ENCODE measurements at regions of chr5 and their contacts with region 1.

Region 1: GRCh38 chr5:16934123-16934522 is 2.0 kb downstream of the MYO10 start:
- DNase-seq: peak; percentile 21
- H3K4me3 Mint-ChIP-seq: peak overlapping the region; percentile 45
- H3K27ac Mint-ChIP-seq: no peak overlapping the region
- H3K4me1 Mint-ChIP-seq: peaks cover 28% of the 10 kb centered on the region
- H3K27me3 Mint-ChIP-seq: peaks cover 60% of the 10 kb centered on the region

Region 2: DNA sequence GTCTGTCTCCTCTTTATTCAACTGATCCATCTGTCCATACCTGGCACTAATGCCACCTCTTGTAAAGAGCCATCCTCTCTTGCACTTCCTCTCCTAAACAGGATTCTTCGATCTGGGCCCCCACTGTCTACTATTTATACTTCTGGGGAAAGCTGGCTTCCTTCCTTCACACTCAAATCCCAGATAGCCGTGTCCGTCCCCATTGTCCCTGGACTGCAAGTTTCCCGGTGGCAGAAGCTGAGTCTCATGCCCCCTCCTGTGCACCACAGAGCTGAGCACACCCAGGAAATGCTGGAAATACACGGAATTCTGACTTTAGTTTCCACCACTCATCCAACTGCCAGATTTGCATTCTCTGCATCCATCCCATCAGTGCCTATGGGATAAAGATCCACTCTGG is 838.5 kb before region 1 on chr5:
- intact Hi-C with region 1: no loop called
- DNase-seq: no peak
- H3K4me3 Mint-ChIP-seq: no peak overlapping the region
- H3K27ac Mint-ChIP-seq: no peak overlapping the region
- H3K4me1 Mint-ChIP-seq: no peaks in the 10 kb centered on the region
- H3K27me3 Mint-ChIP-seq: no peaks in the 10 kb centered on the region

Region 3: DNA sequence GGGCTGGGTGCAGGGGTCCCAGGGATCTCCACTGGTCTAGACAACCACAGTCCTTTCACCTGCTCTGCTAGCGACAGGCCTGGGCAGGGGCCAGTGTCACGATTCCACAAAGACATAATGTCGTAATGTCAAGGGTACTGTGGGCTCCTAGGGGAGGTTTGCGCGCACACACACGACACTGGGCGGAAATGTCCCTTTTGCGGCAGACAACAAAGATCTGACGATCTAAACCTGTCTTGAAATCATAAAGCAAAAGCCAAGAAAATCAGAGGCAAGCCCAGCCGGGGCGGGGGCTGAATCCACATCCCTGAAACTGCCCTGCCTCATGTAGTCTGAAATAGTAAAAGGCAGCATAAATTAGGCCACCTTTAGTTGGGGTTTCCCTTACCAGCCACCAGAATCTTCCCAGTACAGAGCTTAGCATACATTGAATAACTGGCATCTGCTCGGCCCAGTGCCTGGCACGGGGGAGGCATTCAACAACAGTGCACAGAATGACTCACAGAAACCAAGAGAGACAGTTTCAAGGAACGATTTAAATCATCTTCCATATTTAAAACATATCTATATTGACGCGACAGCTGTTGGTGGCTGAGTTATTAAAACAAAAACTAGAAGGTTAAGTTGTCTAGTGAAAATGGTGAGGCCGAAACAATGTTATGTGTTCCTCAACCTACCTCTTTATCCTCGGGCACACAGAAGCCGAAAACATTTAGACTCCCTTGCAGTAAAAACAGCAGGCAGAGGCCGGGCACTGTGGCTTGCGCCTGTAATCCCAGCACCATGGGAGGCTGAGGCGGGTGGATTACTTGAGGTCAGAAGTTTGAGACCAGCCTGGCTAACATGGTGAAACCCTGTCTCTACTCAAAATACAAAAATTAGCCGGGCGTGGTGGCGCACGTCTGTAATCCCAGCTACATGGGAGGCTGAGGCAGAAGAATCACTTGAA is 149.0 kb before region 1 on chr5:
- intact Hi-C with region 1: loop called (anchors 5 kb)
- DNase-seq: no peak
- H3K4me3 Mint-ChIP-seq: no peak overlapping the region
- H3K27ac Mint-ChIP-seq: no peak overlapping the region
- H3K4me1 Mint-ChIP-seq: peaks cover 16% of the 10 kb centered on the region
- H3K27me3 Mint-ChIP-seq: peaks cover 11% of the 10 kb centered on the region

Region 4: DNA sequence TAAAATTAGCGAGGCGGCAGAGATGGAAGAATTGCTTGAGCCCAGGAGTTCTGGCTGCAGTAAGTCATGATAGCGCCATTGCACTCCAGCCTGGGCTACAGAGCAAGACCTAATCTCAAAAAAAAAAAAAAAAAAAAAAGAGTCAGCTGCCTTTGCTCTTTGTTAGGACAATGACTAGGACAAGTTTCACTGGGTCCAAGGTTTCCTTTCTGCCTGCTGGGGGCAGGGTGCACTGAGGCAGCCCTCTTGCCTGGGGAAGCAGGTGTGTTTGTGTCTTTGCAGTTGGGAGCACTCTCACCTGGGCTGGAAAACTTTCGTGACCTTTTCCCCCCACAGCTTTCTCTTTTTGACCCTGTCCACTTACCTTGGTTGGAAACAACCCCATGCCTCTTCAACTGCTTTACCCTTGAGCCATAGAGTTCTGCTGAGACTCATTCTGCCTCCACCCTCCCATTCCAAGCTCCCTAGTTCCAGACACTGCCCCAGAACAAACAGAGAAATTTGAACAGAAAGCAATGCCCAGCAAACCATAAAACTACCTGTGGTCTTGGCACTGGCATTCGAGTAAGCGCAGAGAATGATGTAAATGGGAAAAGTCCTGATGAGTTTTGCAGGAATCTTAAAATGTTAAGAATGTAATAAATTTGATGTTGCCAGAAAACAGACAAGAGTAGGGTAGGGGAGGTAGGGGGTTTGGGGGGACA is 19.0 kb after region 1 on chr5:
- intact Hi-C with region 1: no loop called
- DNase-seq: no peak
- H3K4me3 Mint-ChIP-seq: no peak overlapping the region
- H3K27ac Mint-ChIP-seq: no peak overlapping the region
- H3K4me1 Mint-ChIP-seq: no peaks in the 10 kb centered on the region
- H3K27me3 Mint-ChIP-seq: no peaks in the 10 kb centered on the region

Region 5: DNA sequence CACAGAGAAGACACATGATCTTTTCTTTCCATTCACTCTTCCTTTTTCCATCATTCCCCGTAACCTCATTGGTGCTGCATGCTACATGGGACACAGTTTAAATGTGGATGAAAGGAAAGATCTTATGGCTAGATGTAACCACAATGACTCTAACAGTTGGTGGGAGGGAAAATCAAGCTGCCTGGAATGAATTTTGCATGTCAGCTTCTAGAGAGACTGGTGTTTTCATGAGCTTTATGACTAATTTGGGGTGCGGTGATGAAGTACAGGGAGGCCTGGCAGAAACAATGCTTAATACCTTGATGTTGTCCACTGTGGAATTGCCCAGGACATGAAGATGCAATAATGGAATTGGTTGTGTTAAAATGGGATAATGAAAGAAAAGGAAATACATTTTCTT is 57.9 kb after region 1 on chr5:
- intact Hi-C with region 1: loop called (anchors 2 kb)
- DNase-seq: no peak
- H3K4me3 Mint-ChIP-seq: no peak overlapping the region
- H3K27ac Mint-ChIP-seq: no peak overlapping the region
- H3K4me1 Mint-ChIP-seq: peaks cover 7% of the 10 kb centered on the region
- H3K27me3 Mint-ChIP-seq: peaks cover 7% of the 10 kb centered on the region

Region 6: GRCh38 chr5:17189381-17190036 is 255.4 kb after region 1 on chr5:
- intact Hi-C with region 1: loop called (anchors 1 kb)
- DNase-seq: peak; percentile 22
- H3K4me3 Mint-ChIP-seq: no peak overlapping the region
- H3K27ac Mint-ChIP-seq: no peak overlapping the region
- H3K4me1 Mint-ChIP-seq: no peaks in the 10 kb centered on the region
- H3K27me3 Mint-ChIP-seq: no peaks in the 10 kb centered on the region

Measured in activated T-helper 2 cell treated with anti-CD3 and anti-CD28 coated beads, Interferon-gamma antibody, Interleukin-2, Interleukin-4, amounts not matched to agents 10 μg/mL and 5 μg/mL and 100 μg/mL, durations not matched to agents 14 hours and 24 hours and 36 hours (primary cell).